HAP-1 (cell line): ENCODE measurements at regions of chr1 and their contacts with region 1.

Region 1: DNA sequence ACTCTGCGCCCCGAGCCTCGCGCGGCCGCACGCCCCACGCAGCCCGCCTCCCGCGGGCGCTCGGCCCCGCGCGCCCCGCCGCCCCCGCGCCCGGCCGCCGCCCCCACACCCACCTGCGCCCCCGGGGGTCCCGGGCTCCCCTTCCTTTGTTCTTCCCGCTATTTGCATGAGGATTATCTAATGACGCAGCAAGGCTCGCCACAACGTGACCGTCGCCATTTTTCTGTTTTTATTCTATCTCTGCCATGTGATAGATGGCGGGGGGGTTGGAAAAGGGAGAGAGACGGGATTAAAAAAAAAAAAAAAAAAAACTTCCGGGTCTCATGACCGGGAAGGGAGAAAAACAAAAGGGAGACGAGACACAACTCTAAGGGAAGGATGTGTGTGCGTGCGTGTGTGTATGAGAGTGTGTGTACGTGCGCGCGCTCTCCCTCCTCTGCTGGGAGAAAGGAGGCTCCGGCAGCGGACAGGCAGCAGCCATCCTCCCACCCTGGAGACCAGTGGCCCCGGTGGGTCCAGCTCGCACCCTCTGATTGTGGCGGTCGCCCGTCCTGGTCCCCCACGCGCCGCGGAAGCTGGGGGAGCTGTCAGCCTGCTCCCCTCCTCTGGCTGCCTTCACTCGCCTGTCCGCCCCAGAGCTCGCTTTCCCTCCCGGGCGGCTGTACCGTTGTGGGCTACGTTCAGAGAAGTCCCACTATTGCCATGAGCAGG is 80.4 kb upstream of the AK4 start:
- DNase-seq: peak; percentile 78 to 79
- H3K4me3 ChIP-seq: peak overlapping the region; percentile 49
- H3K4me1 ChIP-seq: peaks cover 12% of the 10 kb centered on the region
- H3K27me3 ChIP-seq: no peaks in the 10 kb centered on the region

Region 2: DNA sequence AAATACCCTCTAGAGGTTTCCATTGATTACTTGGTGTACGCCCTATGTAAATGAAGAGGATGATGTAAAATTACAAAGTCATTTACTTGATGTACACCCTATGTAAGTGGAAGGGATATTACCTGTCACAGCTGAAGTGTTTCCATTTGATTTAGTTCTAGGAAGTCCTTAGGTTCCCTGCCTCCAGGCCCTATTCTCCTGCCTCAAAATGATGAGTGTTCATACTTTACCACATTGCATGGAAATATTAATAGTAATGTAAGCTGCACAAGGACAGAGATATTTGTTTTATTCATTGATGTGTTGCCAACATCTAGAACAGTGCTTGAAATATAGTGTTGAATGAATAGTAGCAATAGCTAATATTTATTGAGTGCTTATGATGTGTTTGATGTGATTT is 70.9 kb after region 1 on chr1:
- in situ Hi-C with region 1: no loop called
- DNase-seq: no peak
- H3K4me3 ChIP-seq: no peak overlapping the region
- H3K4me1 ChIP-seq: peaks cover 25% of the 10 kb centered on the region
- H3K27me3 ChIP-seq: no peaks in the 10 kb centered on the region

Region 3: DNA sequence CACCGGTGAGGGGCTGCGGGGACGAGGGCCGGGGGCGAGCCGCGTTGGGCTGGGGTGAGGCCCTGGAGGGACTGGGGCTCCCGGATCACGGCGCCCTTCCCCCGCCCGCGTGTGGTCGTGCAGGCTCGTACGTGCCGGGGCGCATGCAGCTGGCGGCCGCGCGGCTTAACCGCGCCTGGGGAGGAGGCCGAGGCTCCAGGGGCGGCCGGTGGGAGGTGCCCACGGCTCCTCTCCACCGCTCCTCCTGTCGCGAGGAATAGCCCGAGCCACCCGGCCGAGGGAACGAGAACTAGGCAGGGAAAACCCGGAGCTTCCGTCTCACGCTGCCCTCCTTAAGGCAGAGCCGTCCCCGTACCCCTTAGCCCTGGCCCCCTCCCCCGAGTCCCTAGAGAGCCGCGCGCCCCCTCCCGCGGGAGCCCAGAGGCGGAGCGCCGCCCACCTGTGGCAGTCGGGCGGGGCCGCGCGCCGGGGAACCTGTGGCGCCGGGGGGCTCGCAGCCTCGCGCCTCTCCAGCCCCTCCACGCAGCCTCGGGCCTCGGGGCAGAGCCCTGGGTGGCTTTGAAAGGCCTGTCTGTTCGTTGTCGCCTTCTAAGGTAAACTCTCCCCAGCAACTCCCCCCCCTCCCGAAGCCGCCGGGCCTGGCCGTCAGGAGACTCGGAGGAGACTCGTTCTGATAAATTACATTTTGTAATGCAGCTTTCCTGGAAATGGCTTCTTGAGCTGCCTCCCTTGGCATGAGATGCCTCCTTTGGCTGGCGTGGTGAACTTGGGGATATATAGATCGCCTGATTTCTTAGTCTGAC is 81.1 kb after region 1 on chr1:
- in situ Hi-C with region 1: loop called (anchors 5 kb)
- DNase-seq: peak; percentile 16 to 62
- H3K4me3 ChIP-seq: peak overlapping the region; percentile 45
- H3K4me1 ChIP-seq: peaks cover 11% of the 10 kb centered on the region
- H3K27me3 ChIP-seq: peaks cover 7% of the 10 kb centered on the region

Region 4: DNA sequence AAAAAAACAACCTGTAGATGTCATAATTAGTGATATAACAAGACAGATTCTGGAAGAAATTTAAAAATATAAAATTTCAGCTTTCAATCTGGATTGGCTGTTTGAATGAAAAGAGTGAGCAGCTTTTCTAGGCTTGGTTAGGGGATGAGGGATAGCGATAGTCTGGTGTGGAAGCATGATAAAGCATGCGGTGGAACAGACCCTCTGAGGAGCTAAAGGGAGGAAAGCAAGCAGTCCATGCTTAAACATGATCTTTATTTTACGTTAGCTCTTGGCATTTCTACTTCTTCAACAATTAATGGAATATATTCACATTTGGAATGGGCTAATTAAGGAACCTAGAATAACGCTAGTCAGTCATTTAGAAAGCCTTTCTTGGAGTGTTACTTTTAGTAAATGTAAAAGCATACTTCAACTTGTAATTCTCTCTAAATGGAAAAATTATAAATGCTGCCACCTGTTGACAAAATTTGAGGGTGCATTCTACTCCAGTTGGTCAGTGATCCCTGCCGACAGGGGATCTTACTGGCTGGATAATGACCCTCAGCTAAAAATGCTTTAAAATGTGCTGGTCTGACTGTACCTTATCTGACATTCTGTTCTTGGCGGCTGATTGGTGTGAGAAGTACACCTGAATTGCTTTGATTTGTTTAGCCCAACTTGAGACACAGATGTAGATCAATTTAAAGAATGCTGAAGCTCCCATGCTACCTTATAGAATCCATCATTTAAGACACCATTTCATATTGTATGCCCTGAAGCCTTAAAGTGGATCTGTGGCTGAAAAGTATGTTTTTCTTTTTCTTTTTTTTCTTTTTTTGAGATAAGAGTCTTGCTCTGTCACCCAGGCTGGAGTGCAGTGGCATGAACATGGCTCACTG is 141.6 kb after region 1 on chr1:
- in situ Hi-C with region 1: loop called (anchors 5 kb)
- DNase-seq: peak; percentile 55 to 62
- H3K4me3 ChIP-seq: no peak overlapping the region
- H3K4me1 ChIP-seq: peaks cover 4% of the 10 kb centered on the region
- H3K27me3 ChIP-seq: no peaks in the 10 kb centered on the region

Region 5: DNA sequence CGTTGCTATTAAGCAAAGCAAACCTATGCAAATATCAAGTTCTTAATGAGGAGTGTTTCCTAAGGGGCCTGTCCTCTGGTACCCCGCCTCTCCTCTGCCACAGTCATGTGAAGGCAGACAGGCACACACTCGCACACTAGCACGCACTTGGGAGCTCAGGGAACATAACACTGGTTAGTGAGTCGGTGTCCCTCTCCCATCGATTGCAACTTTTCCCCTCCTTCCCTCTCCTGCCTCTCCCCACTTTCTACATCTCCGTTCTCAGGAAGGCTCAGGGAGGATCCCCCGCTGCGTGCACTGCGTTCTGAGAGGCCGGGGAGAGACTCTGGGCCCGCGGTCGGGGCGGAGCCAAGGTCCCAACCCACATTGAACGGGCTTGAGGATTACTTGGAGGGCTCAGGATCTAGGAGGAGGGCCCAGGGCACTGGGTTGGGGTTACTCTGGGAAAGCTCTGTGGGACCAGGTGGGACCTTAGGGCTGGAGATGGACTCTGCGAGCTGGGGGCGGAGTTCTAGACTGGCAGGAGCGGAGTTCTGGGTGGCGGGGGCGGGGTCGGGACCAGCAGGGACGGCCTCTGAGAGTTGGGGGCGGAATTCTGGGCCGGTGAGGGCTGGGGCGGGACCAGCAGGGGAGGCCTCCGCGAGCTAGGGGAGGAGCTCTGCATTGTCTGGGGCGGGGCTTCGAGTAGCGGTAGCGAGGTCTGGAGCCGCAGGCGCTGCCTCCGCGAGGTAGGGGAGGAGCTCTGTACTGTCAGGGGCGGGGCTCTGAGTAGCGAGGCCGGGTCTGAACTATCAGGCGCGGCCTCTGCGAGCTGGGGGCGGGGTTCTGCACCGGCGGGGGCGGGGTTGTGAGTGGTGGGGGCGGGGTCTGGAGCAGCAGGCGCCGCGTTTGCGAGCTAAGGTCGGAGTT is 352.3 kb after region 1 on chr1:
- in situ Hi-C with region 1: loop called (anchors 25 kb)
- DNase-seq: peak; percentile 94 to 99
- H3K4me3 ChIP-seq: peak overlapping the region; percentile 93
- H3K4me1 ChIP-seq: peaks cover 18% of the 10 kb centered on the region
- H3K27me3 ChIP-seq: no peaks in the 10 kb centered on the region

Region 6: DNA sequence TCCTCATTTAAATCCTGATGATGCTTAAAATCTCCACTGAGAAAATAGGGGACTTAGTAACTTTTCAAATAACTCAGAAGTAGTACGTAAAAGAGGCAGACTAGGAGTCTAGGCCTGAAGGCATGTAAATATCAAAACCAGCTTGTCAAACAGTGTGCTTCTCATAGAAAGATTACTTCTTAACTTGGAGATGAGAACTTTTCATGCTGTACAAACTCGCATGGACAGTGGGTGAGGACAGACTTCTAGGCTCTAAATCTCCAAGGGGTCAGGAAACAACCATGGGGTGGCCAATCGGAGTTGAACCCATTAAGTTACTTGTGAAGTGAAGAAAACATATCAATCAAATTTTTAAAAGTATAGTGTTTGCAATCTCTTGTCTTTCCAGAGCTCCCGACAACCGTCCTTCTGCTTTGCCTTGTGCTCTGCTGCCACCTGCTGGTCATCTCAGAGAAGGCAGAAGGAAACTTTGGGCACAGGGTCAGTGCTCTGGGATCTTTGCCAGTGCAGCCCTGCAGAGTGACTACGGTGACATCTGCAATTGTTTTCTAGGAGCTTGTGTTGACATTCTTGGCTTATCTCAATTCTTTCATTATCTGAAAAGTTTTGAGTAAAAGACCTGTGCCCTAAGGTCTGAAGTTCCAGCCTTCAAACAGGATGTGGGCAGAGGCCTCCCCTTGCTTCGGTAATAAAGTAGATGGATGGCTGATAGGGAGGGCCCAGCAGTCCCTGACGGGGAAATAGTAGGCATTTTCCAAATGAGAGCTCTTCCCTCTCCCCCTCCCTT is 620.0 kb after region 1 on chr1:
- in situ Hi-C with region 1: loop called (anchors 25 kb)
- DNase-seq: peak; percentile 59 to 90
- H3K4me3 ChIP-seq: no peak overlapping the region
- H3K4me1 ChIP-seq: no peaks in the 10 kb centered on the region
- H3K27me3 ChIP-seq: no peaks in the 10 kb centered on the region